ENCODE measurements at regions of chr9 and their contacts with region 1.

Region 1: GRCh38 chr9:111501648-111502047 is 17.5 kb upstream of the ECPAS start:
- DNase-seq: no peak
- ATAC-seq: no peak
- H3K4me3 ChIP-seq: no peak overlapping the region
- H3K27ac ChIP-seq: no peak overlapping the region
- H3K4me1 ChIP-seq: no peaks in the 10 kb centered on the region
- H3K27me3 ChIP-seq: no peaks in the 10 kb centered on the region
- CTCF ChIP-seq: no peak

Region 2: GRCh38 chr9:111516061-111516465 is 14.4 kb after region 1 on chr9:
- CTCF ChIA-PET with region 1: interaction called, 15 read pairs
- POLR2A ChIA-PET with region 1: interaction called, 4 read pairs
- in situ Hi-C with region 1: no loop called
- intact Hi-C with region 1: no loop called
- DNase-seq: no peak
- ATAC-seq: peak; percentile 70
- H3K4me3 ChIP-seq: no peak overlapping the region
- H3K27ac ChIP-seq: no peak overlapping the region
- H3K4me1 ChIP-seq: 0 out of 2 replicates have a peak, but pooled peaks cover 5% of the 10 kb centered on the region
- H3K27me3 ChIP-seq: no peaks in the 10 kb centered on the region
- CTCF ChIP-seq: no peak

Region 3: GRCh38 chr9:113299800-113300292 is 1798.2 kb after region 1 on chr9:
- CTCF ChIA-PET with region 1: interaction called, 11 read pairs
- POLR2A ChIA-PET with region 1: no interaction called
- in situ Hi-C with region 1: no loop called
- intact Hi-C with region 1: no loop called
- DNase-seq: no peak
- ATAC-seq: no peak
- H3K4me3 ChIP-seq: no peak overlapping the region
- H3K27ac ChIP-seq: no peak overlapping the region
- H3K4me1 ChIP-seq: no peaks in the 10 kb centered on the region
- H3K27me3 ChIP-seq: no peaks in the 10 kb centered on the region; the same call in 1 of the 2 replicates
- CTCF ChIP-seq: no peak

Measured in Panc1 (cell line).